ENCODE measurements at regions of chrX and their contacts with region 1.

Region 1: DNA sequence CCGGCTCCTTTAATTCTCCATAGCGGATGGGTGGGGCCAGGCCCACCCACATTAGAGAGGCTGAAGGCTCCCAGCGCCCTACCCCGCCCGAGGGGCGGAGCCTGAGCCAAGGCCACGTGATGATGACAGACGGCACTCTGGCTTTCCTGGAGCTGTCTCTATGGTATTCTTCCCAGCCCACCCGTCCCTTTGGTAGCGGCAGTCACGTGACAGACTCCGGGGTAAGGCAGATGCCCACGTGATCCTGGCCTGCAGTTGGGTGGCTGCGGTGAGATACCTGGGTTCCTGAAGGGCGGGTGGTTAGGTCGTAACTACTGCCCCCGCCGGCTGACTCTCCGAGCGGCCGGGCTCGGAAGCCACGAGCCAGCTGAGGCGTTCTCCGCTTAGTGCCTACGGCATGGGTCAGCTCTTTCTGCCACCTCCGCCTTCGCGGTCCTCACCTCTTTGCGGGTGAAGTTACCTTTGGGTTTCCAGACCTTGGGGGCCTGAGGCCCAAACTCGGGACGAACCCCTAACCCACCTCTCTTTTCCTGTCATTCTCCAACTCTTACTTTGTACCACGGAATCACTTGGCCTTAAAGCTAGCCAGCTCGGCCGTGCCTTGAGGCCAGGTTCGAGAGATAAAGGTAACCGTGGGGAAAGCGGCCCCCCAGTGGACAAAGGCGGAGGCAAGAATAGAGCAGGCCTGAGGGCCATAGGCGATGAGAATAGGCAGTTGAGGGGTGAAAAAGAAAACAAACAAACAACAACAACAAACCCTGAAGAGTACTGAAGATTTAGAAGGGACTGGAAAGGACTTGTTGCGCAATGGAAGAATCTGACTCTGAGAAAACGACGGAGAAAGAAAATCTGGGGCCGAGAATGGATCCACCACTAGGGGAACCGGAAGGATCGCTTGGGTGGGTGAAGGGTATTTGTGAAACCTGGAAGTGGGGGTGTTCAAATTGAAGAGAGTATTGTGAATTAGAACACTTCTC is at the start of gene RRAGB:
- DNase-seq: peak; percentile 78 to 96 (median 89)
- ATAC-seq: peak; percentile 98
- H3K4me3 ChIP-seq: peak within 1 kb of the TSS; percentile 76 to 88
- H3K4me3 Mint-ChIP-seq: peak within 1 kb of the TSS; percentile 75
- H3K27ac ChIP-seq: peak within 1 kb of the TSS; percentile 87 to 93
- H3K27ac Mint-ChIP-seq: peak within 1 kb of the TSS; percentile 92
- H3K4me1 ChIP-seq: peaks cover 14% of the 10 kb centered on the region
- H3K4me1 Mint-ChIP-seq: peaks cover 37% of the 10 kb centered on the region
- H3K27me3 ChIP-seq: no peaks in the 10 kb centered on the region
- H3K27me3 Mint-ChIP-seq: no peaks in the 10 kb centered on the region
- CTCF ChIP-seq: peak; percentile 58
- total RNA-seq, gene RRAGB: 4.9 to 6.6 TPM

Region 2: GRCh38 chrX:54182864-54183608 is 1534.8 kb before region 1 on chrX and contains the start of gene FAM120C:
- CTCF ChIA-PET with region 1: no interaction called
- POLR2A ChIA-PET with region 1: interaction called, 3 read pairs
- intact Hi-C with region 1: loop called in 1 of 2 experiments (anchors 10 kb)
- DNase-seq: peak; percentile 26 to 83 (median 59)
- ATAC-seq: peak; percentile 70
- H3K4me3 ChIP-seq: peak within 1 kb of the TSS; percentile 60 to 72
- H3K4me3 Mint-ChIP-seq: peak within 1 kb of the TSS; percentile 78
- H3K27ac ChIP-seq: peak within 1 kb of the TSS; percentile 75 to 83
- H3K27ac Mint-ChIP-seq: peak within 1 kb of the TSS; percentile 88
- H3K4me1 ChIP-seq: peaks cover 38% of the 10 kb centered on the region
- H3K4me1 Mint-ChIP-seq: peaks cover 43% of the 10 kb centered on the region
- H3K27me3 ChIP-seq: no peaks in the 10 kb centered on the region
- H3K27me3 Mint-ChIP-seq: no peaks in the 10 kb centered on the region
- CTCF ChIP-seq: no peak
- total RNA-seq, gene FAM120C: 10.9 to 11.1 TPM

Region 3: GRCh38 chrX:54529552-54530357 is 1188.1 kb before region 1 on chrX and contains the start of gene GNL3L:
- CTCF ChIA-PET with region 1: no interaction called
- POLR2A ChIA-PET with region 1: no interaction called
- intact Hi-C with region 1: loop called (anchors 2 to 5 kb)
- DNase-seq: peak; percentile 55 to 89 (median 78)
- ATAC-seq: peak; percentile 83
- H3K4me3 ChIP-seq: peak within 1 kb of the TSS; percentile 85 to 95
- H3K4me3 Mint-ChIP-seq: peak within 1 kb of the TSS; percentile 97
- H3K27ac ChIP-seq: peak within 1 kb of the TSS; percentile 79 to 94
- H3K27ac Mint-ChIP-seq: peak within 1 kb of the TSS; percentile 97
- H3K4me1 ChIP-seq: peaks cover 22% of the 10 kb centered on the region
- H3K4me1 Mint-ChIP-seq: peaks cover 40% of the 10 kb centered on the region
- H3K27me3 ChIP-seq: no peaks in the 10 kb centered on the region
- H3K27me3 Mint-ChIP-seq: no peaks in the 10 kb centered on the region
- CTCF ChIP-seq: no peak
- total RNA-seq, gene GNL3L: 20.9 to 24.0 TPM

Region 4: GRCh38 chrX:54891573-54891972 is 826.2 kb before region 1 on chrX:
- CTCF ChIA-PET with region 1: no interaction called
- POLR2A ChIA-PET with region 1: no interaction called
- intact Hi-C with region 1: loop called in 1 of 2 experiments (anchors 2 kb)
- DNase-seq: peak in 8 of 9 experiments; percentile 1 to 67 (median 25)
- ATAC-seq: peak; percentile 38
- H3K4me3 ChIP-seq: no peak overlapping the region
- H3K4me3 Mint-ChIP-seq: no peak overlapping the region
- H3K27ac ChIP-seq: no peak overlapping the region
- H3K27ac Mint-ChIP-seq: no peak overlapping the region
- H3K4me1 ChIP-seq: no peaks in the 10 kb centered on the region
- H3K4me1 Mint-ChIP-seq: no peaks in the 10 kb centered on the region
- H3K27me3 ChIP-seq: no peaks in the 10 kb centered on the region
- H3K27me3 Mint-ChIP-seq: peaks cover 12% of the 10 kb centered on the region
- CTCF ChIP-seq: peak; percentile 18

Region 5: GRCh38 chrX:55451990-55452832 is 265.6 kb before region 1 on chrX and contains the start of gene MAGEH1:
- CTCF ChIA-PET with region 1: no interaction called
- POLR2A ChIA-PET with region 1: interaction called, 7 read pairs
- intact Hi-C with region 1: loop called in 1 of 2 experiments (anchors 10 kb)
- DNase-seq: peak; percentile 55 to 92 (median 78)
- ATAC-seq: peak; percentile 91
- H3K4me3 ChIP-seq: peak within 1 kb of the TSS; percentile 76 to 86
- H3K4me3 Mint-ChIP-seq: peak within 1 kb of the TSS; percentile 93
- H3K27ac ChIP-seq: peak within 1 kb of the TSS; percentile 81 to 83
- H3K27ac Mint-ChIP-seq: peak within 1 kb of the TSS; percentile 97
- H3K4me1 ChIP-seq: peaks cover 12% of the 10 kb centered on the region
- H3K4me1 Mint-ChIP-seq: peaks cover 20% of the 10 kb centered on the region
- H3K27me3 ChIP-seq: no peaks in the 10 kb centered on the region
- H3K27me3 Mint-ChIP-seq: no peaks in the 10 kb centered on the region
- CTCF ChIP-seq: no peak
- total RNA-seq, gene MAGEH1: 13.0 to 14.7 TPM

Region 6: GRCh38 chrX:55867181-55867651 is 149.4 kb after region 1 on chrX:
- CTCF ChIA-PET with region 1: no interaction called
- POLR2A ChIA-PET with region 1: no interaction called
- intact Hi-C with region 1: no loop called
- DNase-seq: peak in 2 of 9 experiments; percentile 1 to 8
- ATAC-seq: no peak
- H3K4me3 ChIP-seq: no peak overlapping the region
- H3K4me3 Mint-ChIP-seq: no peak overlapping the region
- H3K27ac ChIP-seq: no peak overlapping the region
- H3K27ac Mint-ChIP-seq: no peak overlapping the region
- H3K4me1 ChIP-seq: peaks cover 6% of the 10 kb centered on the region
- H3K4me1 Mint-ChIP-seq: peaks cover 10% of the 10 kb centered on the region
- H3K27me3 ChIP-seq: no peaks in the 10 kb centered on the region
- H3K27me3 Mint-ChIP-seq: no peaks in the 10 kb centered on the region
- CTCF ChIP-seq: no peak

Region 7: GRCh38 chrX:55907968-55908607 is 190.3 kb after region 1 on chrX:
- CTCF ChIA-PET with region 1: interaction called, 8 read pairs
- POLR2A ChIA-PET with region 1: no interaction called
- intact Hi-C with region 1: loop called (anchors 1 kb)
- DNase-seq: peak in 8 of 9 experiments; percentile 13 to 62 (median 38)
- ATAC-seq: peak; percentile 66
- H3K4me3 ChIP-seq: peak overlapping the region; percentile 78 to 80
- H3K4me3 Mint-ChIP-seq: peak overlapping the region; percentile 95
- H3K27ac ChIP-seq: peak overlapping the region; percentile 26 to 43
- H3K27ac Mint-ChIP-seq: peak overlapping the region; percentile 88
- H3K4me1 ChIP-seq: no peaks in the 10 kb centered on the region
- H3K4me1 Mint-ChIP-seq: peaks cover 24% of the 10 kb centered on the region
- H3K27me3 ChIP-seq: no peaks in the 10 kb centered on the region
- H3K27me3 Mint-ChIP-seq: no peaks in the 10 kb centered on the region
- CTCF ChIP-seq: peak; percentile 44

Region 8: GRCh38 chrX:57595381-57595811 is 1877.6 kb after region 1 on chrX:
- CTCF ChIA-PET with region 1: no interaction called
- POLR2A ChIA-PET with region 1: no interaction called
- intact Hi-C with region 1: loop called in 1 of 2 experiments (anchors 10 kb)
- DNase-seq: peak in 2 of 9 experiments; percentile 27 to 47
- ATAC-seq: no peak
- H3K4me3 ChIP-seq: no peak overlapping the region
- H3K4me3 Mint-ChIP-seq: peak overlapping the region; percentile 73
- H3K27ac ChIP-seq: no peak overlapping the region
- H3K27ac Mint-ChIP-seq: peak overlapping the region; percentile 49
- H3K4me1 ChIP-seq: peaks cover 20% of the 10 kb centered on the region
- H3K4me1 Mint-ChIP-seq: peaks cover 42% of the 10 kb centered on the region
- H3K27me3 ChIP-seq: no peaks in the 10 kb centered on the region
- H3K27me3 Mint-ChIP-seq: no peaks in the 10 kb centered on the region
- CTCF ChIP-seq: no peak

Measured in CD8-positive, alpha-beta T cell (primary cell).